ENCODE measurements at regions of chr22 and their contacts with region 1.

Region 1: GRCh38 chr22:27614006-27614649 is 187.4 kb downstream of the MN1 start:
- DNase-seq: no peak
- ATAC-seq: no peak
- H3K4me3 ChIP-seq: no peak overlapping the region
- H3K4me3 Mint-ChIP-seq: no peak overlapping the region
- H3K27ac ChIP-seq: no peak overlapping the region
- H3K27ac Mint-ChIP-seq: no peak overlapping the region
- H3K4me1 ChIP-seq: no peaks in the 10 kb centered on the region
- H3K4me1 Mint-ChIP-seq: no peaks in the 10 kb centered on the region
- H3K27me3 ChIP-seq: peaks cover 0 to 30% of the 10 kb centered on the region in 2 experiments
- H3K27me3 Mint-ChIP-seq: peaks cover 27 to 36% of the 10 kb centered on the region in 2 donors

Region 2: DNA sequence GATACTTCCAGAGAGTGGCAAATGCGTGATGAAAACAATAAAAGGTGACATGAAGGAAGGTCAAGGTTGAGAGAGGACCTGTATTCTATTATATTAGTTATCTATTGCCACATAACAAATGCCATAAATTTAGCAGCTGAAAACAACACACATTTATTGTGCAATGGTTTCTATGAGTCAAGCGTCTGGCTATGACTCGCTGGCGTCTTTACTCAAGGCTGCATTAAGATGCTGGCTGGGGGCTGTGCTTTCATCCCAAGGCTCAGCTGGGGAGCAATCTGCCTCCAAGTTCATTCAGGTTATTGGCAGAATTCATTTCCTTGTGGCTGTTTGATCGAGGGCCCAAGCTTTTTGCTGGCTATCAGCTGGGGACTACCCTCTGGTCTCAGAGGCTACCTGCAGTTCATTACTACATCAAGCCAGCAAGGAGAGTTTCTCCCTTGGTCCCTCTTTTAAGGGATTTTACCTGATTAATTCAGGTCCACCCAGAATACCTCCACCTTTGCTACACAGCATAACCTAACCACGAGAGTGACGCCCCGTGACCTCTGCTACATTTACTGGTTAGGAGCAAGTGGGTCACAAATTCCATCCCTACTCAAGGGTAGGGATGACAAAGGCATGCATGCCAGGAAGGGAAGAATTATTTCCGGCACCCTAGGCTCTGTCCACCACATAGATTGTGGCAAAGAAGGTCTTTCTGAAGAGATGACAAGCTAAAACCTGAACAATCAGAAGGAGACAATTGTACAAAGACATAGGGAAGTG is 361.7 kb before region 1 on chr22:
- CTCF ChIA-PET with region 1: no interaction called
- POLR2A ChIA-PET with region 1: no interaction called
- DNase-seq: no peak
- ATAC-seq: no peak
- H3K4me3 ChIP-seq: no peak overlapping the region
- H3K4me3 Mint-ChIP-seq: no peak overlapping the region
- H3K27ac ChIP-seq: no peak overlapping the region
- H3K27ac Mint-ChIP-seq: no peak overlapping the region
- H3K4me1 ChIP-seq: no peaks in the 10 kb centered on the region
- H3K4me1 Mint-ChIP-seq: peaks cover 5% of the 10 kb centered on the region in 3 donors
- H3K27me3 ChIP-seq: no peaks in the 10 kb centered on the region
- H3K27me3 Mint-ChIP-seq: peaks cover 0 to 6% of the 10 kb centered on the region in 2 donors

Region 3: DNA sequence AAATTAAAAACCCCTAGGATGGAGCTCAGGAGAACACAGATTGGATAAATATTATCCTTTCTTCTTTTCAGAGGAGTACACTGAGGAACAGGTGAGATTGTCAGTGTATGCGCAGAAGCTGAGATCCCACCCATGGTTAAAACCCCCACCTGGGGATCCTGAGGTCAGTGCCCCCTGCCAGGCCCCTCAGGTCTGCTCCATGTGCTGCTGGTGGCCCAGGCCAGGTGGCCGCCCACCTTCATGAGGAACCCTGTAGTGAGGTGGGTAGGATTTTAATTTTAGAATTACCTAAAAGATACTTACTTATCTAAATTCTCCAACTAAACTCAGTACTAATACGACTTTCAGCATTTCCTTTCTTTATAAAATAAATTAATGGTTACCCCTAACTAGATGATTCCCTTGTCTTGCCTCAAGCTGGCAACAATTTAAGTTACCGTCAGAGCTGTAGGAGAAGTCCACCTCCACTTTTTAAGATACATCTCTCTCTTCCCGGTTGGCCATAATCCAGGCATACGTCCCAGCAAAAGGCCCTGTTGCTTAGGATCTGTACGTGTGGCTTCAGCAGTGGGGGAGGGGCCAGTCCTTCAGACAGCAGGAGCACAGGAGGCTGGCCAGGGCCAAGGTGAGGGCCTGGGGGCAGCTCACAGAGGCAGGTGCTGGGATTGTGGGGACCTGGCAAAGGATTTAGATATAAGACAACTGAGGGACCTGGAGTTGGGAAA is 366.5 kb after region 1 on chr22:
- CTCF ChIA-PET with region 1: no interaction called
- POLR2A ChIA-PET with region 1: interaction called in 1 of 2 experiments, 11 read pairs
- DNase-seq: no peak
- ATAC-seq: no peak
- H3K4me3 ChIP-seq: no peak overlapping the region
- H3K4me3 Mint-ChIP-seq: no peak overlapping the region
- H3K27ac ChIP-seq: no peak overlapping the region
- H3K27ac Mint-ChIP-seq: no peak overlapping the region
- H3K4me1 ChIP-seq: no peaks in the 10 kb centered on the region
- H3K4me1 Mint-ChIP-seq: no peaks in the 10 kb centered on the region
- H3K27me3 ChIP-seq: no peaks in the 10 kb centered on the region
- H3K27me3 Mint-ChIP-seq: no peaks in the 10 kb centered on the region

Measured in T-cell (primary cell).